CD4-positive, alpha-beta T cell (primary cell): ENCODE measurements at regions of chr1 and their contacts with region 1.

Region 1: DNA sequence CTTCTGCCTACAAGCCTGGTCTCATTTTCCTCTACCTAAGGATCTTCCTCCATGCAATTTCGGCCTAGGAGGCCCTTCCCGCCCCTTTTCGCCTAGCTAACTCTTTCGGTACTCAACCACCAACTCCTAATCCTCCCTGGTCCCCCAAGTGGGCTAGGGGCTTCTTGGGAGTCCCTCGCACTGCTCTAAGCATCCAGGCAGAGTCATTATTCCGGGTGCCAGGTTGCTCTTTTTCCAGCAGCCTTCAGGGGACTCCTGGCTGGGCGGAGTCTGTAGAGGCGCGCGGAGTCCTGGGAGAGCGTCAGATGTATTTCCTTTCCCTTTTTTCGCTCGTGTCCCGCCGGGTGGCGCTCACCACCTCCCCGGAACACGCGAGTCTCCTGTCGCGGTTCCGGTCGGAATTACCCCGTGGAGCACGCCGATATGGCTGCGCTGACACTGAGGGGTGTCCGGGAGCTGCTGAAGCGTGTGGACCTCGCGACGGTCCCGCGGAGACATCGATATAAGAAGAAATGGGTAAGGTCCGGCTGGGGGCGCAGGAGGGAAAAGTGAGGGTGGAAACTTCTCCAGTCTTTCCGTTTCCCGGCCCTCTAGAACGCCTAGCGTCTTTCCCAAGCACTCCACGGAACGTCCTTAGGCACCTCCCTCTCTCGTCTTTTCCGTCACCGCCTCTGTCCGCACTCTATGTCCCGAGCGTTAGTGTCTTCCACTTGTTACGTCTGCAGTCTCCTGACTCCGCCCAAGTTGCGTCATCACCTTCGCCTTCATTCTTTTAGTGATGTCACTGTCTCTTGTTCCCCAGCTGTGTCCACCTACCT is at the start of gene NSUN4:
- DNase-seq: peak; percentile 64 to 96 (median 80)
- ATAC-seq: peak; percentile 86
- H3K4me3 ChIP-seq: peak within 1 kb of the TSS; percentile 99
- H3K4me3 Mint-ChIP-seq: peak within 1 kb of the TSS; percentile 99
- H3K27ac ChIP-seq: peak within 1 kb of the TSS; percentile 91 to 99
- H3K27ac Mint-ChIP-seq: peak within 1 kb of the TSS; percentile 97
- H3K4me1 ChIP-seq: peaks cover 27% of the 10 kb centered on the region
- H3K4me1 Mint-ChIP-seq: peaks cover 52% of the 10 kb centered on the region
- H3K27me3 ChIP-seq: no peaks in the 10 kb centered on the region
- H3K27me3 Mint-ChIP-seq: no peaks in the 10 kb centered on the region
- CTCF ChIP-seq: peak; percentile 80
- total RNA-seq, gene NSUN4: 34.9 to 36.7 TPM

Region 2: DNA sequence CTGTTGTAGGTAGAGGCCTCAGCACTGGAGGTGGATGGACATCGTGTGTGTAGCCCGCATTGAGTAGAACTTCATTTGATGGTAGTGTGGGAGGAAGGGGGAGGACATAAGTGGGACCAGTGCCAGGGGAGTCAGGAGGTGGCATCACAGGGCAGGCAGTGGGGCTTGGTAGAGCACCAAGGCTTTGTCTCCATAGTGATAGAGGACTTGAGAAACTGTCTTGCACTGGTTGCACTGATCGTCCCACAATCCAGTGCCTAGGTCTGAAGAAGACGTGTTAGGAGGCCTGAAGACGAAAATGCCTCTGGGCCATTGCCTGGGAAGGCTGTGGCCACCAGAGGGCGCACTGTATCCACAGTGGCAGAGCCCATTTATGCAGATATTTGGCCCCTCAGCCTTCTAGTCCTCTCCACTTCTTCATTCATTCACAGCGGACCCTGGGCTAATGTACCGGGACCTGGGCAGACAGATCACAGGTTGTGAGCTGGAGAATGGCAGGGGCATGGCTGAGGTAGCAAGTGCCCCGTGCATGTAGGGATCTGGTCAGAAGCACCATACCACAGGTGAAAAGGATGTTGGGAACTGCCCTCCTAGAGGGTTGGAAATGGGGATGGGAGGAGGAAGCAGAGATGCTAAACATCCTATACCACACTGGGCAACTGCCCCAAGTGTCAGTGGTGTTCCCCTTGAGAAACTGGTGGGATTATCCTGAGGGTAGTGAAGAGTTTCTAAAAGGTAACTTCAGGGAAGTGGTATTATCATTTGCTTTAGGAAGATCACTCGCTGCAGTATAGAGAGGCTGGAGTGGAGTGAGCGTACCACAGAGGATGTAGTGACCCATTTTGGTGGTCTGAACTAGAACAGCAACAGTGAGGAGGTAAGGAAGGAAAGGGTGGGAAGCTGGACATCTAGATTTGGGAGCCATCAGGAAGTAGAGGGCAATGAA is 303.4 kb before region 1 on chr1:
- CTCF ChIA-PET with region 1: no interaction called
- POLR2A ChIA-PET with region 1: no interaction called
- intact Hi-C with region 1: loop called (anchors 5 kb)
- DNase-seq: peak; percentile 71 to 91 (median 83)
- ATAC-seq: peak; percentile 75
- H3K4me3 ChIP-seq: no peak overlapping the region
- H3K4me3 Mint-ChIP-seq: no peak overlapping the region
- H3K27ac ChIP-seq: no peak overlapping the region
- H3K27ac Mint-ChIP-seq: no peak overlapping the region
- H3K4me1 ChIP-seq: peaks cover 6% of the 10 kb centered on the region
- H3K4me1 Mint-ChIP-seq: no peaks in the 10 kb centered on the region
- H3K27me3 ChIP-seq: no peaks in the 10 kb centered on the region
- H3K27me3 Mint-ChIP-seq: no peaks in the 10 kb centered on the region
- CTCF ChIP-seq: peak; percentile 99

Region 3: DNA sequence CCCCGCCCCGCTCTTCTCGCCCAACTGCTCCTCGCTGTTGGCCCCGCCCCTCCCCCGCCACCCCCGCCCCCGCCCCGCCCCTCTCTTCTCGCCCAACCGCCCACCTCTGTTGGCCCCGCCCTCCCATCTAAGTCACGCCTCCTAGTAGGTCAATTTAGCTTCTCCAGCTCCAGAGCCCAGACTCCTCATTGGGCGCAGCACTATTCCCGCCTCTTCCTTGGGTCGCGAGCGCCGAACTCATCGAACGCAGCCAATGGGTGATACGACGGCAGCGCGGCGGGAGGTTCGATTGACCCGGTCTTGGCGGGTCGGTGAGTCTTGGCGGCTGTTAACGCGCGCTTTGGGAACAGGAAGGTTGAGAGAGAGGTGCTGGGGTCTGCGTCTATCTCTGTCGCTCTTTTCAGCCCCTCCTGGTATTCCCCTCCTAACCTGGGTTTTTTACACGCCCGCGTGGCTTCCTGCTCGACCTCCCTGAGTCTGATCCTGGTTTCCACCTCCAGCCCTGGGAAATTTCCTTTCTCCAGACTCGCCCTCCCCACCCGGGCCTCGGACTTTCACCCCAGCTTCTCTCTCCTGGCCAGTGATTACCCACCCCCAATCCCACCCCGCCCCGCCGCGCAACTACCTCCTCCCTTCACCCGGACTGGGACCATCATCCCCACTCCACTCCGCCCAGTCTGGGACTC is 93.0 kb before region 1 on chr1 and contains the start of gene RAD54L:
- CTCF ChIA-PET with region 1: interaction called, 11 read pairs
- POLR2A ChIA-PET with region 1: interaction called, 9 read pairs
- intact Hi-C with region 1: loop called (anchors 1 to 2 kb)
- DNase-seq: peak; percentile 92 to 99 (median 94)
- ATAC-seq: peak; percentile 96
- H3K4me3 ChIP-seq: peak within 1 kb of the TSS; percentile 83
- H3K4me3 Mint-ChIP-seq: peak within 1 kb of the TSS; percentile 89
- H3K27ac ChIP-seq: no peak within 1 kb of the TSS
- H3K27ac Mint-ChIP-seq: peak within 1 kb of the TSS; percentile 36
- H3K4me1 ChIP-seq: peaks cover 21% of the 10 kb centered on the region
- H3K4me1 Mint-ChIP-seq: peaks cover 26% of the 10 kb centered on the region
- H3K27me3 ChIP-seq: no peaks in the 10 kb centered on the region
- H3K27me3 Mint-ChIP-seq: no peaks in the 10 kb centered on the region
- CTCF ChIP-seq: no peak
- total RNA-seq, gene RAD54L: 0.33 to 1.0 TPM

Region 4: GRCh38 chr1:46303038-46303871 is 37.4 kb before region 1 on chr1 and contains the starts of genes LRRC41 and UQCRH:
- CTCF ChIA-PET with region 1: interaction called, 29 read pairs
- POLR2A ChIA-PET with region 1: interaction called, 30 read pairs
- intact Hi-C with region 1: loop called (anchors 1 to 2 kb)
- DNase-seq: peak; percentile 89 to 97 (median 92)
- ATAC-seq: peak; percentile 89
- H3K4me3 ChIP-seq: peak within 1 kb of the TSS; percentile 98
- H3K4me3 Mint-ChIP-seq: peak within 1 kb of the TSS; percentile 100
- H3K27ac ChIP-seq: peak within 1 kb of the TSS; percentile 69 to 91
- H3K27ac Mint-ChIP-seq: peak within 1 kb of the TSS; percentile 98
- H3K4me1 ChIP-seq: peaks cover 60% of the 10 kb centered on the region
- H3K4me1 Mint-ChIP-seq: peaks cover 58% of the 10 kb centered on the region
- H3K27me3 ChIP-seq: no peaks in the 10 kb centered on the region
- H3K27me3 Mint-ChIP-seq: no peaks in the 10 kb centered on the region
- CTCF ChIP-seq: no peak
- total RNA-seq, gene LRRC41: 23.0 to 24.3 TPM
- total RNA-seq, gene UQCRH: 101 to 103 TPM

Region 5: DNA sequence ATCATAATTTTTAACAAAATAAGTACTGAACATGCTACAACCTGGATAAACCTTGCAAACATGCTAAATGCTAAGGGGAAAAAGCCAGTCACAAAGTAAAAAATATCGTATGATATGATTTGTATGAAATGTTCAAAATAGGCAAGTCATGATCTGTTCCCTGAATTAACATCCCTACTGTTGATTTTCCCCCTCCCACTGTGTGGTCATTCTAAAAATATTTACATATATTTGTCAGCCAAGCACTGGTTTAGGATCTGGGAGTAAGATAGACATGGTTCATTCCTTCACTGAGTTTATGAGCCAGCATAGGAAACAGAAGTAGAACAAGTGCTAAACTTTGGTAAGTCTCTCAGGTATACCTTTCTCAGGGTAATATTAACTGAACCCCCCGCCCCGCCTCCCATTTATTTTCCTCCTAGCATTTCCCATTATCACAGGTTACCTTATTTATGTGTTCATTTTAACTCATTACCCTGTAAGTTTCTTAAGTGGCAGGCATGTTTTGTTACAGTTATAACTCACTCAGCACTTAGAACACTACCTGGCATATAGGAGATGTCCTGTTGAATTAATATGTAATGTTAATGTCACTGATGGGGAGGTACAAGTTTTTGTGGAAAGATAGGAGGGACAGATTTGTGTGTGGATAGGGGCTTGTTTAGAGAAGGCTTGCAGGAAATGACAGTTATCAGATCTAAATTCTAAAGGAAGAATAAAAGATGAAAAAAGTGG is 24.8 kb before region 1 on chr1:
- CTCF ChIA-PET with region 1: no interaction called
- POLR2A ChIA-PET with region 1: no interaction called
- intact Hi-C with region 1: no loop called
- DNase-seq: no peak
- ATAC-seq: no peak
- H3K4me3 ChIP-seq: no peak overlapping the region
- H3K4me3 Mint-ChIP-seq: no peak overlapping the region
- H3K27ac ChIP-seq: no peak overlapping the region
- H3K27ac Mint-ChIP-seq: no peak overlapping the region
- H3K4me1 ChIP-seq: no peaks in the 10 kb centered on the region
- H3K4me1 Mint-ChIP-seq: no peaks in the 10 kb centered on the region
- H3K27me3 ChIP-seq: no peaks in the 10 kb centered on the region
- H3K27me3 Mint-ChIP-seq: no peaks in the 10 kb centered on the region
- CTCF ChIP-seq: no peak

Region 6: DNA sequence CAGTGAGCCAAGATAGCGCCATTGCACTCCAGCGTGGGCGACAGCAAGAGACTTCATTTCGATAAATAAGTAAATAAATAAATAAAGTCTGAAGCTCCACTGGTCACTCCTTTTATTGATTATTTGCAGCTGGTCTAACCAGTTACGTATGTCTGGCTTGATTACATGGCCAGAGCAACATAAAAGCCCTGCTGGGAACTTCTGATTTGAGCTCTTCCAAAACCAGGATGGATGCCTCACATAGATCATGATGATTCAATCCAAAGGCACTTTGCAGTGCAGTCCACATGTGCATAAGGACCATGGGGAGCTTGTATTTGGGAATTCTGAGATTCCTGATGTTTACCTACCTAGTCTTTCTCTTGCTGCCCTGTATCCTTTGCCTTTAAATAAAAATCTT is 24.0 kb after region 1 on chr1:
- CTCF ChIA-PET with region 1: no interaction called
- POLR2A ChIA-PET with region 1: no interaction called
- intact Hi-C with region 1: no loop called
- DNase-seq: no peak
- ATAC-seq: no peak
- H3K4me3 ChIP-seq: no peak overlapping the region
- H3K4me3 Mint-ChIP-seq: no peak overlapping the region
- H3K27ac ChIP-seq: no peak overlapping the region
- H3K27ac Mint-ChIP-seq: no peak overlapping the region
- H3K4me1 ChIP-seq: no peaks in the 10 kb centered on the region
- H3K4me1 Mint-ChIP-seq: no peaks in the 10 kb centered on the region
- H3K27me3 ChIP-seq: no peaks in the 10 kb centered on the region
- H3K27me3 Mint-ChIP-seq: no peaks in the 10 kb centered on the region
- CTCF ChIP-seq: no peak

Region 7: GRCh38 chr1:46466477-46467182 is 126.0 kb after region 1 on chr1:
- CTCF ChIA-PET with region 1: no interaction called
- POLR2A ChIA-PET with region 1: no interaction called
- intact Hi-C with region 1: no loop called
- DNase-seq: peak in 4 of 14 experiments; percentile 9 to 26 (median 16)
- ATAC-seq: peak; percentile 37
- H3K4me3 ChIP-seq: peak overlapping the region; percentile 52
- H3K4me3 Mint-ChIP-seq: peak overlapping the region; percentile 72
- H3K27ac ChIP-seq: no peak overlapping the region
- H3K27ac Mint-ChIP-seq: no peak overlapping the region
- H3K4me1 ChIP-seq: peaks cover 10% of the 10 kb centered on the region
- H3K4me1 Mint-ChIP-seq: peaks cover 12% of the 10 kb centered on the region
- H3K27me3 ChIP-seq: peaks cover 22 to 54% of the 10 kb centered on the region in 2 experiments
- H3K27me3 Mint-ChIP-seq: peaks cover 73% of the 10 kb centered on the region
- CTCF ChIP-seq: no peak

Region 8: DNA sequence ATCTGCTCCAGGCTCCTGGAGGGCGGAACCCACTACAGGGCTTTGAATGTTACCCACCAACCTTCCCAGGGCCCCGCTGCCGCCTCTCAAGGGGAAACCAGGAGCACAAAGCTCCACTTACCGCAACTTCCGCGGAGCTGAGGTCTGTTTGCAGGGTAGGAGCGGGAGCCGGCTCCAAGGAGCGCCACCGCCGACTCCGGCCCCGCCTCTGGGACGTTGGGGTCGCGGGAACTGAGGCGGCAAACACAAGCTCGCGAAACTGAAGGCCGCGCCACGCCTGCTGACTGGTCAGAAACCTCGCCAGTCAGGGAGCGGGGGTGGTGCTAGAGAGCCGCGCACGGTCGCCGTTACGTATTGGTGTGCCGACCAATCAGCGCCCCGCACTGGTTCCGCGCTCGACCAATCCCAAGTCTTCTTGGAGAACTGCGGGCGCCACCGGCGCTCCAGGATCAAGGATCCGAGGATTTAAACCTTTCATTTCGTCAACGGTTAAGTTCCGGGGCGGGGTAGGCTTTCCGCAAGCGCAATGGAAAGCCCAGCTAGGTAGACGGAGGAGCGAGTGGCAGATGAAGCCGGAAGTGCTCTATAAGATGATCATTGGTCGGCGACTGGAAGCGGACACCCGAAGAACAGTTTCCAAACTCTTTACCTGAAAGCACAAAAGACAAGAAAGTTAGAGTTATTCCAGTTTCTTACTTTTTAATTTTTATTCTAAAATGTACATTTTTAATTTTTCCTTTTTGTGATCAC is 973.5 kb after region 1 on chr1 and contains the start of gene STIL:
- CTCF ChIA-PET with region 1: no interaction called
- POLR2A ChIA-PET with region 1: no interaction called
- intact Hi-C with region 1: loop called in 1 of 2 experiments (anchors 10 kb)
- DNase-seq: peak; percentile 91 to 99 (median 94)
- ATAC-seq: peak; percentile 94
- H3K4me3 ChIP-seq: peak within 1 kb of the TSS; percentile 84
- H3K4me3 Mint-ChIP-seq: peak within 1 kb of the TSS; percentile 93
- H3K27ac ChIP-seq: peak within 1 kb of the TSS; percentile 46 to 86
- H3K27ac Mint-ChIP-seq: peak within 1 kb of the TSS; percentile 91
- H3K4me1 ChIP-seq: peaks cover 11% of the 10 kb centered on the region
- H3K4me1 Mint-ChIP-seq: peaks cover 19% of the 10 kb centered on the region
- H3K27me3 ChIP-seq: no peaks in the 10 kb centered on the region
- H3K27me3 Mint-ChIP-seq: no peaks in the 10 kb centered on the region
- CTCF ChIP-seq: no peak
- total RNA-seq, gene STIL: 1.7 to 2.1 TPM